ENCODE measurements at regions of chr11 and their contacts with region 1.

Region 1: GRCh38 chr11:125568970-125569914 is at the start of gene EI24:
- DNase-seq: peak; percentile 81 to 96 (median 91)
- H3K4me3 ChIP-seq: peak within 1 kb of the TSS; percentile 65 to 99 (median 93)
- H3K27ac ChIP-seq: peak within 1 kb of the TSS; percentile 43 to 96 (median 88)
- H3K27me3 ChIP-seq: no peaks in the 10 kb centered on the region
- CTCF ChIP-seq: peak; percentile 49 to 89 (median 78)
- total RNA-seq, gene EI24: 38.1 to 71.8 (median 53.9) TPM

Region 2: DNA sequence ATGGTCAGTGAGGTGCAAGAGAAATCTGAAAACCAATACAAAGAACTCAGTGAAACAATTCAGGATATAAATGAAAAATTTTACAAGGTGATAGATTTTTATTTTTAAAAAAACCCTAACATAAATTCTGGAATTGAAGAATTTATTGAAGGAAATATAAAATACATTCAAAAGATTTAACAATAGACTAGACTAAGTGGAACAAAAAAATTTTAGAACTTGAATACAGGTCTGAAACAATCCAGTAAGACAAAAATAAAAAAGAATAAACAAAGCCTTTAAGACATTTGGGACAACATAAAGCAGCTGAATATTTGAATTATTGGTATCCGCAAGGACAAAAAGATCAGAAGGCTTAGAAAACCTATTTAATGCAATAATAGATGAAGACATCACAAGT is 886.8 kb before region 1 on chr11:
- intact Hi-C with region 1: no loop called
- DNase-seq: no peak
- H3K4me3 ChIP-seq: no peak overlapping the region
- H3K27ac ChIP-seq: no peak overlapping the region
- H3K27me3 ChIP-seq: no peaks in the 10 kb centered on the region
- CTCF ChIP-seq: no peak

Region 3: GRCh38 chr11:125111343-125112207 is 457.7 kb before region 1 on chr11 and contains the start of gene TMEM218:
- intact Hi-C with region 1: no loop called
- DNase-seq: peak; percentile 99 to 100 (median 100)
- H3K4me3 ChIP-seq: peak within 1 kb of the TSS; percentile 50 to 97 (median 86)
- H3K27ac ChIP-seq: peak within 1 kb of the TSS in 57 of 59 donors; percentile 43 to 92 (median 78)
- H3K27me3 ChIP-seq: no peaks in the 10 kb centered on the region
- CTCF ChIP-seq: peak in 14 of 56 donors; percentile 7 to 42 (median 24)
- total RNA-seq, gene TMEM218: 5.4 to 17.7 (median 9.7) TPM

Region 4: GRCh38 chr11:125390946-125391345 is 178.3 kb before region 1 on chr11:
- intact Hi-C with region 1: no loop called
- DNase-seq: no peak
- H3K4me3 ChIP-seq: no peak overlapping the region
- H3K27ac ChIP-seq: peak overlapping the region in 1 of 59 donors; percentile 16
- H3K27me3 ChIP-seq: no peaks in the 10 kb centered on the region
- CTCF ChIP-seq: no peak

Region 5: DNA sequence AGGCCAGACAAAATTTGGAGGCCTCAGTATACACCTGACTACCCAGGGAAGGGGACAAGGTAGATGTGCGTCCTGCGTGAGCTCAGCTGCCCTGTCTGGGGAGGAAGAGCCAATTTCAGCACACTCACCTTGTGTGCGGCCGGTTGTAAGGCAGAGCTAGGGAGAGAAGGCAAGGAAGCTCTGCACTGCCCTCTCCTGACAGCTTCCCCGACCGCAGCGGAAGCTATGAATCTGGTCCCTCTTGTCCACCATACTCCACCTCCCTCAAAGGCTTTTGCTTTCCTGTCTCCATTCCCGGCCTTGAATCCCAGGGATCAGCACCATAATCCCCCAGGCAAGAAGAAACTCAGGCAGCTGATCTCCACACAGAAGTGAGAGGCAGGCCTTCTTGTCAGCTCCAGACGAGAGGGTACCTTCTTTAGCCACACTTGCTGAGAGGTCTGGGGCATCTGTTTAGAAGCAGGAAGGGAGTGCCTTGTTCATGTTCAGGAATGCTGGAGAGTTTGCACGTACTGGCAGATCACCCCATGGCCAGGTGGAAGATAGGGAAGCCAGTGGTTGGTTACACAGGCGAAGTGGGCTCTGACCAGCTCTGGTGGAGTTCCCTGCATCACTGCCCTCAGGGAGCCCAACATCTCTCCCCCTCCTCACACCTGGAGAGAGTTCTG is 135.7 kb before region 1 on chr11:
- intact Hi-C with region 1: loop called (anchors 5 to 10 kb)
- DNase-seq: peak; percentile 58 to 86 (median 79)
- H3K4me3 ChIP-seq: peak overlapping the region in 8 of 59 donors; percentile 11 to 46 (median 20)
- H3K27ac ChIP-seq: peak overlapping the region in 57 of 59 donors; percentile 15 to 90 (median 73)
- H3K27me3 ChIP-seq: no peaks in the 10 kb centered on the region
- CTCF ChIP-seq: peak; percentile 12 to 78 (median 64)

Region 6: DNA sequence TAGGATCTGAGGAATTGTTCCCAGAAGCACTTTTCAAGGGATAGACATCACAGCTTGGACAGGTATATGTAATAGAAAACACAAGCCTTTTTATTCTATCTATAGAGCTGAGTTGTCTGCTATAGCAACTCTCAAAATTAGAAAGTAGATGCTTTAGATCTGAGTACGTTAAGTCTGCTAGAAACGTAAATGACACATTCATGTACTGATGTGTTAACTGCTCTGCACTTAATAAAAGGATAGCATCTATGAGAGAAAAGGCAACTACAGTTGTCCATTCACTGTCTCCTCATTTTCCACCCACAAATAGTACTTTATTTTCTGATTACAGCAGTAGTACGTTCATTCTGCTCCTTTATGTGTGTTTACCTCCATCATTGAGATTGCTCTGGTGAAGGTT is 17.4 kb after region 1 on chr11:
- intact Hi-C with region 1: loop called in 1 of 2 experiments (anchors 2 kb)
- DNase-seq: no peak
- H3K4me3 ChIP-seq: no peak overlapping the region
- H3K27ac ChIP-seq: no peak overlapping the region
- H3K27me3 ChIP-seq: no peaks in the 10 kb centered on the region
- CTCF ChIP-seq: no peak

Region 7: DNA sequence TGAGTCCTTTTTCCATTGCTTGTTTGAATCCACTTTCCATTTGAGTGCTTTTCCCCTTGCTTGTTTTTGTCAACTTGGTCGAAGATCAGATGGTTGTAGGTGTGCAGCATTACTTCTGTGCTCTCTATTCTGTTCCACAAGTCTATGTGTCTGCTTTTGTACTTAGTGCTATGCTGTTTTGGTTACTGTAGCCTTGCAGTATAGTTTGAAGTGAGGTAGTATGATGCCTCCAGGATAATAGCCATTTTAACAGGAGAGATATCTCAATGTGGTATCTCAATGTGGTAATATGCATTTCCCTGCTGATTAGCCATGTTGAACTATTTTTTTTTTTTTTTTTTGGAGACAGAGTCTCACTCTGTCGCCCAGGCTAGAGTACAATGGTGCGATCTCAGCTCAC is 94.7 kb after region 1 on chr11:
- intact Hi-C with region 1: no loop called
- DNase-seq: no peak
- H3K4me3 ChIP-seq: no peak overlapping the region
- H3K27ac ChIP-seq: no peak overlapping the region
- H3K27me3 ChIP-seq: no peaks in the 10 kb centered on the region
- CTCF ChIP-seq: no peak

Measured in dorsolateral prefrontal cortex (tissue), 120 donors.